ENCODE measurements at regions of chr11 and their contacts with region 1.

Region 1: GRCh38 chr11:62792202-62792575 is 383 bp upstream of the TMEM223 start:
- DNase-seq: no peak
- CTCF ChIP-seq: no peak

Region 2: DNA sequence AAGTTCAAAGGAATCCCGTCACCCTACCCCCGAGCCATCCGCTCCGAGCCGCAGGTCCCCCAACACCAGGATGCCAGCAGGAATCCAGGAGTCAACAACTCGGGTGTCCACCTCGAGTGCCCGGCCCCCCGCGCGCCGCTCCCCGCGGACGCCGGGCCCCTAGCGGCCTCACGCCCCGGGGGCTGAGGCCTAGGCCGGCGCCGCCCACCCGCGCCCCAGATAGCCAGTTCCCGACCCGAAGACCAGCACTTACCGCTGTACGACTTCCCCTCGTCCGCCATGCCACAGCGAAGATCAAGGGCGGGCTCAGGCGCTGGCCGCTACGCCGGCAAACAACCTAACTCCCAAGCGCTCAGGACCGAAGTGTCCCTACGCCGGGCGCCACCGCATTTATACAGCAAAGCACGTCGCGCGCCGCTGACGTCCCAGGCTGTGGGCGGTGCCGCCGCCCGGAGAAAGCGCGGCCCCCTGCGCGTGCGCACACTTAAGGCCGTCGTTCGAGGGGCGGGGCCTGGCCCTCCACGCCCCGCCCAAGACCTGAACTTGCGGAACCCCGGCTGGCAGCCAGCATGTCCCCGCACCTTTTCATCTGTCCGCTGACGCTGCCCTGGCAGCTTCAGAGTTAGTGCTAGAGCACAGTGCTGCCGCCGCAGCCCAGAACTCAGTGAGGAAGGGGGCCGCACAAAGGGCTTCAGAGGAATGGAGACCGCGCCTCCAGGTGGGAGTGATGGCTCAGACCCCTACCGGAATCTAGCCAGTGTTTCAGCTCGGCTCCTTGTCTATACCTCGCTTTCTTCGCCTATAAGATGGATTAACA is 13.1 kb after region 1 on chr11 and contains the start of gene NXF1:
- CTCF ChIA-PET with region 1: interaction called, 24 read pairs
- POLR2A ChIA-PET with region 1: interaction called, 28 read pairs
- DNase-seq: peak; percentile 100
- CTCF ChIP-seq: no peak